H1 (cell line): ENCODE measurements at regions of chr22 and their contacts with region 1.

Region 1: DNA sequence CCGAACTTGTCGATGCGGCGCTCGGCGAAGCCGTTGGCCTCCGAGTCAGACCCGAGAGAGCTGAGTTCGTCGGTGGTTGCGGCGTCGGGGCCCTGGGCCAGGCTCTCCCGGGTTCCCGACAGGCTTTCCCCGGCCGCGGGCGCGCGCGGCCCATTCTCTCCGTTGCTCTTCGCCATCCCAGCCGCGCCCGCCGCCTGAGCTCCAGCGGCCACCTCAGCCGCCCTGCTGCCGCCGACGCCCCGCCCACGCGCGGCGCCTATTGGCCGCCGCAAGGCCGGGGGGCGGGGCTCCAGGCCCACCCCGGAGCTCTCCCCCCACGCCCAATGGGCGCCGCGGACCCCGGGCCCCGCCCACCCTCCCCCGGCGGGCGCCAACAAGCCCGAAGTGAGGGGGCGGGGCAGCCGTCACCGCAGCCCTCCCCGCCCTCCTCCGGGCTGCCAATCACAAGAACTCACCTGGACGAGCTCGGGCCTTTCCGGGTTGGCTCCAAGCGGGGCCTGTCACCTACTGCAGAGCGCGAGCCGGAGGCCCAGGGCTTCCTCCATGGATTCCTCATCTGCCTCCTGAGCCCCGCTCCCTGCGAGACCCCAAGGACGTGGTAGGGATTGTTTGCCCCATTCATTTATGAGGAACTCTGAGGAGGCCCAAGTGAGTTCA is at the start of gene TBC1D10A:
- DNase-seq: peak; percentile 90 to 92
- H3K4me3 ChIP-seq: peak within 1 kb of the TSS; percentile 71 to 99 (median 75)
- H3K27ac ChIP-seq: peak within 1 kb of the TSS; percentile 5; the same call in 1 of the 2 replicates
- H3K4me1 ChIP-seq: peaks cover 0 to 14% (median 7%) of the 10 kb centered on the region in 4 experiments; a peak in 6 of 7 replicates
- H3K27me3 ChIP-seq: no peaks in the 10 kb centered on the region
- CTCF ChIP-seq: no peak; a peak in 1 of 4 replicates
- EP300 ChIP-seq: no peak
- POLR2A ChIP-seq: 0 out of 3 replicates have a peak, but pooled peaks of 1 of the 2 experiments have one; percentile 31
- RAD21 ChIP-seq: no peak
- total RNA-seq, gene TBC1D10A: 5.4 and 6.5 TPM in 2 replicates

Region 2: DNA sequence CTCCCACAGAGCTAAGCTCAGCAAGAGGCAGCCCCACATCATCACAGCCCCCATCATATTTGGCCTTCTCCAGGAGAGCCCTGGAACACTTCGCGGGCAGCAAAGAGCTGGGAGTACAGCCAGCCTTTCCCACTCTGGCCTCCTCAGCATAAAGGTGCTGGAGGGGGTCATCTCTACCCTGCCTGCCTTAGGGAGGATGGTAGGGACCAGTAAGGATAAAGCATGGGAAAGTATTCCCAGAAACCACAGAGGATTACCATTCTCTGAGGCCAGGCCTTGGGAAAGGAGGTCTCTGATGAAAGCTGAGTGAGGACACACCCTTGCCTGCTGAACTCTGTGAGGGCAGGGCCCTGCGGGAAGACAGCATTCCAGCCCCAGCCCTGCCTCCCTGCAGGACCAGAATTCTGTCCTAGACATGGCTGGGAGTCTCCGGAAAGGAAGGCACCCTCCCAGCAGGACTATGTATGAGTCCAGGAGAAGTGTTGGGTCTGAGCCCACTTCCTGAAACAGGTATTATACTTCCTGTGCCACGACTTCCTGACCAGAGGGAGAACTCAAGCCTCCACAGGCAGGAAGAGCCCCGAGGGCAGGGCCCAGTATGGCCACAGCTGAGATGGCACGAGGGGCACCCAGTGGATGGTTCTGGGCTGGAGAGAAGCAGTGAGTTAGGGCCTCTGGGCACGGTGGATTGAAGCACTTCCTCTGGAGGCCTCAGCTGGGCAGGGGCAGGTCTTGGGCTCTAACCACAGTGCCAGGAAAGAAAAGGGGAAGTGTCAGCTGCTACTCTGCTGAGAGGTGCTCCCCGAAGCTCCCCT is 24.6 kb before region 1 on chr22:
- CTCF ChIA-PET with region 1: interaction called, 26 read pairs
- POLR2A ChIA-PET with region 1: interaction called, 3 read pairs
- DNase-seq: no peak
- H3K4me3 ChIP-seq: no peak overlapping the region
- H3K27ac ChIP-seq: no peak overlapping the region
- H3K4me1 ChIP-seq: no peaks in the 10 kb centered on the region; a peak in 1 of 7 replicates
- H3K27me3 ChIP-seq: no peaks in the 10 kb centered on the region
- CTCF ChIP-seq: no peak
- EP300 ChIP-seq: no peak
- POLR2A ChIP-seq: no peak
- RAD21 ChIP-seq: no peak

Region 3: GRCh38 chr22:30340911-30341685 is 14.3 kb after region 1 on chr22:
- CTCF ChIA-PET with region 1: interaction called, 11 read pairs
- POLR2A ChIA-PET with region 1: interaction called, 11 read pairs
- DNase-seq: no peak
- H3K4me3 ChIP-seq: no peak overlapping the region
- H3K27ac ChIP-seq: no peak overlapping the region
- H3K4me1 ChIP-seq: no peaks in the 10 kb centered on the region
- H3K27me3 ChIP-seq: no peaks in the 10 kb centered on the region
- CTCF ChIP-seq: no peak
- EP300 ChIP-seq: no peak
- POLR2A ChIP-seq: no peak
- RAD21 ChIP-seq: no peak

Region 4: DNA sequence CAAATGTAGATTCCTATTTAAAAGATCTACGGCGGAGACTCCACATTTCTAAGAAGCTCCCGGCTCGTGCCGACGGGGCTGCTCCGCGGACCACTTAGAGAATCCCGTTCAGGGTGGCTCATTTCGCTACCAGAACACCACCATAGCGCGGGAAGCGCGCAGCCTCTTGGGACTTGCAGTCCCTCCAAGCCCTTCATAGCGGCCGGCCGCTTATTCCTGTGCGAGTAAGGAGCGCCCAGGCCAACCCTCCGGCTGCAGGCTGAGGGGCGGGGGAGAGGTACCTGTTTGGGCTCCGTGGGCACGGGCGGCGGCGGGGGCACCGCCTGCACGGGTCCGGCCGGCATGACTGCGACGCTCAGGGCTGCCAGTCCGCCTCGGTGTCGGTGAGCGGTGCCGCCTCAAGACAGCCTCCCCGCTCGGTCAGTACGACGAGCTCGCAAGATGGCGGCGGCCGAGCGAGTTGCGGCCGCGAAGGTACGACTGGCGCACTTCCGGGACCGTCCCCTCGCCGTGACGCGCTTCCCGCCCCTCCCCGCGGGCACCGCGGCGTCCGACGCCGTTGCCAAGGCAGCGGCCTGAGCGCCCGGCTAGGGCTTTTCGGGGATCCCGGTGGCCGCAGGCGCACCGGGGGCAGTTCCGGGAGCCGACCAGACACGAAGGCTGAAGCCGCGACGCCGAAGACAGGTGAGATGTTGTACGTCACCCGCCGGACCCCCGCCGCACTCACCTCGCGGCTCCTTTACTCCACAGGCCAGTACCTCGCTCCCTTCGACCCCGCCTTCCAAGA is 29.8 kb after region 1 on chr22 and contains the starts of genes CCDC157 and SF3A1:
- CTCF ChIA-PET with region 1: interaction called, 3 read pairs
- POLR2A ChIA-PET with region 1: interaction called, 28 read pairs
- DNase-seq: peak; percentile 72 to 91
- H3K4me3 ChIP-seq: peak within 1 kb of the TSS; percentile 78 to 93 (median 91)
- H3K27ac ChIP-seq: peak within 1 kb of the TSS; percentile 93
- H3K4me1 ChIP-seq: peaks cover 2 to 11% (median 4%) of the 10 kb centered on the region in 4 experiments; a peak in 6 of 7 replicates
- H3K27me3 ChIP-seq: no peaks in the 10 kb centered on the region
- CTCF ChIP-seq: no peak
- EP300 ChIP-seq: peak in 1 of 2 experiments; percentile 5; a peak in 1 of 3 replicates
- POLR2A ChIP-seq: peak; percentile 87 to 98
- RAD21 ChIP-seq: no peak
- total RNA-seq, gene CCDC157: 4.1 and 4.8 TPM in 2 replicates
- total RNA-seq, gene SF3A1: 275 and 285 TPM in 2 replicates

Region 5: DNA sequence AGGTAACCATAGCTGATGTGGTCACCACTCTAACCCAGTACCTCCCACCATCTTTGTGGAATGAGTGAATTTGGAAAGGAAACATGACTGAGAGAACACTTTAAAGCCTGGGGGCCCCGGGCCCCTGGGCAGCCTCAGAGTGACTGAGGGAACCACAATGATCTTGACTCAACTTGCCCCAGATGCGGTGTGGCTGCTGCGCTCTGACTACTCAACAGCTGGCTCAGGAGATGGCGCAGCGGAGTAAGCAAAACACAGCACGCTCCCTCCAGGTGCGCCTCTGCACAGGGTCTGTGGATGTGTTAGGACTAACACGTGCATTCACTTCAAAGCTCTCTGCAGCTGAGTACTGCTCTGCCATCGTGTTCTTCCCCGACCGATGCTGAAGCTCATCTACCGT is 54.4 kb after region 1 on chr22:
- CTCF ChIA-PET with region 1: interaction called, 10 read pairs
- POLR2A ChIA-PET with region 1: interaction called, 3 read pairs
- DNase-seq: no peak
- H3K4me3 ChIP-seq: no peak overlapping the region
- H3K27ac ChIP-seq: no peak overlapping the region
- H3K4me1 ChIP-seq: peaks cover 0 to 3% (median 0%) of the 10 kb centered on the region in 4 experiments; a peak in 2 of 7 replicates
- H3K27me3 ChIP-seq: no peaks in the 10 kb centered on the region
- CTCF ChIP-seq: no peak
- EP300 ChIP-seq: no peak
- POLR2A ChIP-seq: no peak
- RAD21 ChIP-seq: no peak